ENCODE measurements at regions of chr4 and their contacts with region 1.

Region 1: GRCh38 chr4:152735396-152735859 is 44.1 kb downstream of the TIGD4 start:
- DNase-seq: no peak
- ATAC-seq: peak in 2 of 4 donors; percentile 58 to 74
- H3K4me3 ChIP-seq: no peak overlapping the region
- H3K27ac ChIP-seq: no peak overlapping the region
- H3K4me1 ChIP-seq: no peaks in the 10 kb centered on the region
- H3K27me3 ChIP-seq: no peaks in the 10 kb centered on the region
- CTCF ChIP-seq: peak; percentile 60

Region 2: GRCh38 chr4:152408514-152409327 is 326.7 kb before region 1 on chr4:
- intact Hi-C with region 1: loop called in 1 of 2 experiments (anchors 5 kb)
- DNase-seq: no peak
- ATAC-seq: peak in 2 of 4 donors; percentile 36 to 52
- H3K4me3 ChIP-seq: no peak overlapping the region
- H3K27ac ChIP-seq: no peak overlapping the region
- H3K4me1 ChIP-seq: no peaks in the 10 kb centered on the region
- H3K27me3 ChIP-seq: no peaks in the 10 kb centered on the region
- CTCF ChIP-seq: peak; percentile 46

Region 3: DNA sequence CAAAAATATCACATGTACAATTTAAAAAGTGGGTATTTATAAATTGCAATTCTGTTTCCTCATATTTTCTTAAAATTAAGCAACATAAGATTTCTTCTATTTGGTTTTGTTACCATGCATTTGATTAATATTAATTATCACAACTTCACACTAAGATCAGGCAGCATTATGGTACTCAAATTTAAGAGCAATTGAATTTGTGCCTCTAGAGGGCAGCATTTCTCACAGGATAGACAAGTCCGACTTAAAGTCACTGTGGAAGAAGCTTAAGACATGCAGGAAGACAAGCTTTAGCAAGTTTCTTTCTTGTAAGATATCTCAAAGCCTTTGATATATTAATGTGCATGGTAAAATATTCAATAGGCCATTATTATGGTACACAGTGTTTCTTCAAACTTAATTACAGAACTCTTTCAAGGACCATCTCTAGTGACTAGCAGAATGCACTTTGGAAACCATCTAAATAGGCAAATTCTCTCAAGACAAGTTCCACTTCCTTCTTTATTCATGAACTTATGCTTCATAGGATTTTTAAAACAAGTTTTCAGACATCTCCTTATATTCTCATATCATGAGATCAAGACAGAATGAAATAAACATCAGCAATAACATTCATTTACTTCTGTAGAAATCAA is 234.5 kb before region 1 on chr4:
- intact Hi-C with region 1: loop called (anchors 1 to 2 kb)
- DNase-seq: no peak
- ATAC-seq: peak in 3 of 4 donors; percentile 51 to 91 (median 78)
- H3K4me3 ChIP-seq: no peak overlapping the region
- H3K27ac ChIP-seq: no peak overlapping the region
- H3K4me1 ChIP-seq: no peaks in the 10 kb centered on the region
- H3K27me3 ChIP-seq: no peaks in the 10 kb centered on the region
- CTCF ChIP-seq: peak; percentile 85

Region 4: DNA sequence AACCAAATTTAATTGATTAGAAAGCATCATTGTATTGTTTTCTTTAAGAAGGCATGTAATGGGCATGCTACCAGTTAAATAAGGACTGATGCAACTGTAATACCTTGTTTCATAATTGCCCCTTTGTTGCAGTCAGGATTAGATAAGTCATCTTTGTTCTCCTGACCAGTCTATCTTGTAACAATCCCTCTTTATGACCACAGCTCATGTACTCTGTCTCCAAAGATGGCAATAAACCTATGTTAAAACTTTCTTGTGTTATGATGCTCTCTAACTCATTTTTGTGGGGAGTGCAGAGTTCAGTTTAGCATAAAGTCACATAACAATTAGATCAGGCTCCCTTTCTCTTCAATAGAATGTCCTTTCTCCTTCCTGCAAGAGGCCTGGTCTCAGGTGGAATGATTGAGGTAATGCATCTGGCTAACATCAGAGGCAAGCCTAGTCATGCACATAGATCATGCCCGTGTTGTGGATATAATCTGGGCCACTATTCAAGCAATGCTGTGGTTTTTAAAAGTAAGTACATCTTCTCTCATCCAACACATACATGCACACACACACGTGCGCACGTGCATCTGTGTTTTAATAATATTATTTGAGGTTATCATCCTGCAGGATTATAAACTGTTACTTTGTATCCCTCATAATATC is 101.2 kb before region 1 on chr4:
- intact Hi-C with region 1: loop called in 1 of 2 experiments (anchors 10 kb)
- DNase-seq: no peak
- ATAC-seq: no peak
- H3K4me3 ChIP-seq: no peak overlapping the region
- H3K27ac ChIP-seq: no peak overlapping the region
- H3K4me1 ChIP-seq: no peaks in the 10 kb centered on the region
- H3K27me3 ChIP-seq: no peaks in the 10 kb centered on the region
- CTCF ChIP-seq: no peak

Region 5: GRCh38 chr4:152679414-152680281 is 55.8 kb before region 1 on chr4 and contains the start of gene TMEM154:
- intact Hi-C with region 1: loop called in 1 of 2 experiments (anchors 2 kb)
- DNase-seq: peak; percentile 39 to 70
- ATAC-seq: peak; percentile 36 to 82 (median 72)
- H3K4me3 ChIP-seq: peak within 1 kb of the TSS; percentile 60
- H3K27ac ChIP-seq: no peak within 1 kb of the TSS
- H3K4me1 ChIP-seq: no peaks in the 10 kb centered on the region
- H3K27me3 ChIP-seq: no peaks in the 10 kb centered on the region
- CTCF ChIP-seq: no peak
- total RNA-seq, gene TMEM154: 0.40 to 0.98 (median 0.67) TPM